ENCODE measurements at regions of chr3 and their contacts with region 1.

Region 1: DNA sequence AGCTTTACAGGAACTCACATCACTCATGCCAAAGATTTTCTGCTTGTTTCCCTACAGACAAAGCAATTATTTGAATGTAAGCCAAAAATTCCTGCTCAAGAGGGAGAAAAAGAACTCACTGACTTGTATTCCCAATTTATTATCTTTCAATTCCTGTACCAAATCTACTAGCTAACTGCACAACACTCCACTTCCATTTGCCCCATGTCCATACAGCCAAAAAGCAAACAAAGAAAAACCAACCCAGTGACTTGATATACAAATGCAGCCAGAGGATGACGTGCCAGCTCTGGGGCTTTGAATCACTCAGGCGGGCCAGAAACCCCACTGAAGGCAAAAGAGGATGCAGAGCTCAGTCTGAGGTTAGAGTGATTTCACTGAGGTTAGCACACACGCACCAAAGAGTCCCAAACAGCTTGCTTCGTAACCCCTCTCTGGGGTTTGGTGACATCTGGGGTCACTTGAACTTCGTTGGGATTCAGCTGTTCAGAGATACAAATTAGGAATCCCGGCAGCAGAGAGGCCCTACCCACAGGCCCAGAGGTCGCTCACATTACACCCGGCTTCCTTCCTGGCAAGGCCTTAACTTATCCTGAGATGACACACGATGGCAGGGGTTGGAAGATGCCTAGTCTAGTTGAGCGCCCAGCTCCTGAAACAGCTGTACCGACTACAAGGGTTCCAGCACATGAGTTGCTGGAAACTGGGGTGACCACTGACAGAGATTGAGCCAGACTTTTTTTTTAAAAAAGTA is 1.6 kb downstream of the RFTN1 start:
- DNase-seq: peak; percentile 79
- H3K4me3 Mint-ChIP-seq: peak overlapping the region; percentile 97
- H3K27ac Mint-ChIP-seq: peak overlapping the region; percentile 89
- H3K4me1 Mint-ChIP-seq: peaks cover 83% of the 10 kb centered on the region
- H3K27me3 Mint-ChIP-seq: no peaks in the 10 kb centered on the region

Region 2: GRCh38 chr3:15268033-15268631 is 1243.7 kb before region 1 on chr3:
- intact Hi-C with region 1: loop called (anchors 10 kb)
- DNase-seq: peak; percentile 74
- H3K4me3 Mint-ChIP-seq: no peak overlapping the region
- H3K27ac Mint-ChIP-seq: no peak overlapping the region
- H3K4me1 Mint-ChIP-seq: peaks cover 73% of the 10 kb centered on the region
- H3K27me3 Mint-ChIP-seq: no peaks in the 10 kb centered on the region

Region 3: GRCh38 chr3:16290007-16290826 is 221.6 kb before region 1 on chr3:
- intact Hi-C with region 1: loop called (anchors 1 kb)
- DNase-seq: no peak
- H3K4me3 Mint-ChIP-seq: peak overlapping the region; percentile 91
- H3K27ac Mint-ChIP-seq: peak overlapping the region; percentile 80
- H3K4me1 Mint-ChIP-seq: peaks cover 80% of the 10 kb centered on the region
- H3K27me3 Mint-ChIP-seq: no peaks in the 10 kb centered on the region

Region 4: DNA sequence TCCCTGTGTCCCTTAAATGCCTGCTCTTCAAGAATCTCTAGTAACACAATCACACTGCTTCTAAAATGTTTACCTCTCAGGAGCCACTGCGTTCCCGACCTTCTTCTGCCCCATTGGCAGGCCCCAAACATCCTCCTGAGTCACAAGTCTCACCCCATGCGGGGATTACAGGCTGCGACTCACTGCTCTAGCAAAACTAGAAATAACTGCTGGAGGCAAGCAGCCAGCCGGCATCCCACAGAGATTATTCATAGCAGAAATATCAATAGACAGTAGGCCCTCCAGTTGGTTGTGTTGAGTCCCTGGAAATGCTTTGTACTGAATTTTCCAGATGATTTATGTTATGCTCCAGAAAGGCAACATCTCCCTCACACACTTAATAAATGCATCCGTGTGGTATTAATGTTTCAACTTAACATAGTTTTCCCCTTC is 63.2 kb before region 1 on chr3:
- intact Hi-C with region 1: loop called (anchors 1 kb)
- DNase-seq: no peak
- H3K4me3 Mint-ChIP-seq: no peak overlapping the region
- H3K27ac Mint-ChIP-seq: peak overlapping the region; percentile 79
- H3K4me1 Mint-ChIP-seq: peaks cover 56% of the 10 kb centered on the region
- H3K27me3 Mint-ChIP-seq: no peaks in the 10 kb centered on the region

Region 5: GRCh38 chr3:16482770-16483531 is 28.9 kb before region 1 on chr3:
- intact Hi-C with region 1: loop called (anchors 2 kb)
- DNase-seq: peak; percentile 26
- H3K4me3 Mint-ChIP-seq: peak overlapping the region; percentile 75
- H3K27ac Mint-ChIP-seq: peak overlapping the region; percentile 75
- H3K4me1 Mint-ChIP-seq: peaks cover 84% of the 10 kb centered on the region
- H3K27me3 Mint-ChIP-seq: no peaks in the 10 kb centered on the region

Region 6: DNA sequence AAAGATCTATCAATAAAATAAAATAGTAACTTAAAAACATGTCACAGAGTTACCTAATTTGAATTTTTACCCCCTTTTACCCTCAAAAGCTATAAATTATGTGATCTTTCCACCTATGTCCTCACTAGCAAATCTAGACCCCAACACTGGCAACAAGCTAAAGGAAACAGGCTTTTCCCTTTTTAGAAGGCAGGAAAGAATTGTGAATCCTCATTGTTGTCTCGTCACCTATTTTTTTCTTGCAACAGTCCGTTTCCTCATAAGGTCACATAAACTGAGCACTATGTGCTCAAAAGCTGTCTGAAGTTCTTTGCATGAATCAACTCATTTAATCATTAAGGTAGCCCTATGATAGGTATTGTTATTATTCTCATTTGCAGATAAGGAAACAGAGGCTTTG is 127.9 kb after region 1 on chr3:
- intact Hi-C with region 1: no loop called
- DNase-seq: no peak
- H3K4me3 Mint-ChIP-seq: no peak overlapping the region
- H3K27ac Mint-ChIP-seq: no peak overlapping the region
- H3K4me1 Mint-ChIP-seq: no peaks in the 10 kb centered on the region
- H3K27me3 Mint-ChIP-seq: peaks cover 13% of the 10 kb centered on the region

Region 7: DNA sequence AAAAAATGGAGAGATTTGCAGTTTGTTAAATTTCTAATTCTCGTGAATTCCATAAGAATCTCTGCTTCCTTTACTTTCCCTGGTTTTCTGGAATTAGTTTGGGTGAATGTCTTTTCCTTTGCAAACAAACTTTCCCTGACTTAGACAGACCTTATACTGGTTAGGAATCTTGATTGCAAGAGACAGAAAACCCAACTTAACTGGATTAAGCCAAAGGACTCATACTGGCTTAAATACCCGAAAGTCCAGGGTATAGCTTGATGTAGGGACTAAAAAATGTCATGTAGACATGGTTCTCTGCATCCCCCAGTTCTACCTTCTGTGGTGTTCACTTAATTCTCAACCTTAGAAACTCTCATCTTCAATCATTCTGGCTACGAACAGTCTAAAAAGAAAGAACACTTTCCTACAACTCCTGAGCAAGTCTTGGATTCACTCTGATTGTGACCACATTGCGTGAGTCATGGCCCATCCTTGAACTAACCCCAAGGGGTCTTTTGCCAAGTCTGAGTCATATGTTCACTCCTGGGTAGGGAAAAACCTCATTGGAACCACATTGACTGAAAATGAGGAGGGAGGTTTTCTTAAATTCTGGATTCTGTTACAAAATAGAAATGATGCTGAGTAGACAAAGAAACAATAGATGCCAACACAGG is 229.4 kb after region 1 on chr3:
- intact Hi-C with region 1: no loop called
- DNase-seq: no peak
- H3K4me3 Mint-ChIP-seq: no peak overlapping the region
- H3K27ac Mint-ChIP-seq: no peak overlapping the region
- H3K4me1 Mint-ChIP-seq: peaks cover 5% of the 10 kb centered on the region
- H3K27me3 Mint-ChIP-seq: peaks cover 4% of the 10 kb centered on the region

Region 8: GRCh38 chr3:17742108-17742879 is 1230.4 kb after region 1 on chr3 and contains the start of gene TBC1D5:
- intact Hi-C with region 1: loop called (anchors 2 kb)
- DNase-seq: peak; percentile 90
- H3K4me3 Mint-ChIP-seq: peak within 1 kb of the TSS; percentile 92
- H3K27ac Mint-ChIP-seq: peak within 1 kb of the TSS; percentile 97
- H3K4me1 Mint-ChIP-seq: peaks cover 56% of the 10 kb centered on the region
- H3K27me3 Mint-ChIP-seq: peaks cover 2% of the 10 kb centered on the region
- total RNA-seq, gene TBC1D5: 31.4 and 33.8 TPM in 2 replicates

Measured in activated T-helper 1 cell treated with anti-CD3 and anti-CD28 coated beads, Interleukin-12 subunit alpha, Interleukin-12 subunit beta, Interleukin-2, Interleukin-4 antibody, amounts not matched to agents 30 ng/mL and 10 ng/mL and 1 ng/mL, durations not matched to agents 14 hours and 24 hours and 36 hours (primary cell).